PC-9 (cell line): ENCODE measurements at regions of chr17 and their contacts with region 1.

Region 1: GRCh38 chr17:50151041-50151936 is 812 bp upstream of the PPP1R9B start:
- DNase-seq: peak; percentile 85
- H3K4me3 ChIP-seq: peak overlapping the region; percentile 70
- H3K27ac ChIP-seq: peak overlapping the region; percentile 86
- H3K4me1 ChIP-seq: peaks cover 70% of the 10 kb centered on the region
- H3K27me3 ChIP-seq: no peaks in the 10 kb centered on the region
- CTCF ChIP-seq: peak; percentile 69

Region 2: GRCh38 chr17:50129728-50130558 is 21.3 kb before region 1 on chr17 and contains the start of gene SAMD14:
- CTCF ChIA-PET with region 1: interaction called, 25 read pairs
- POLR2A ChIA-PET with region 1: no interaction called
- intact Hi-C with region 1: no loop called
- DNase-seq: no peak
- H3K4me3 ChIP-seq: no peak within 1 kb of the TSS
- H3K27ac ChIP-seq: no peak within 1 kb of the TSS
- H3K4me1 ChIP-seq: peaks cover 9% of the 10 kb centered on the region; the same call in 1 of the 2 replicates
- H3K27me3 ChIP-seq: peaks cover 28% of the 10 kb centered on the region
- CTCF ChIP-seq: no peak
- total RNA-seq, gene SAMD14: 0.17 and 0.73 TPM in 2 replicates